Activated CD8-positive, alpha-beta T cell treated with anti-CD3 and anti-CD28 coated beads, Interleukin-2, amount 10 ng/mL, durations not matched to agents 7 days and 5 days (primary cell): ENCODE measurements at regions of chr17 and their contacts with region 1.

Region 1: DNA sequence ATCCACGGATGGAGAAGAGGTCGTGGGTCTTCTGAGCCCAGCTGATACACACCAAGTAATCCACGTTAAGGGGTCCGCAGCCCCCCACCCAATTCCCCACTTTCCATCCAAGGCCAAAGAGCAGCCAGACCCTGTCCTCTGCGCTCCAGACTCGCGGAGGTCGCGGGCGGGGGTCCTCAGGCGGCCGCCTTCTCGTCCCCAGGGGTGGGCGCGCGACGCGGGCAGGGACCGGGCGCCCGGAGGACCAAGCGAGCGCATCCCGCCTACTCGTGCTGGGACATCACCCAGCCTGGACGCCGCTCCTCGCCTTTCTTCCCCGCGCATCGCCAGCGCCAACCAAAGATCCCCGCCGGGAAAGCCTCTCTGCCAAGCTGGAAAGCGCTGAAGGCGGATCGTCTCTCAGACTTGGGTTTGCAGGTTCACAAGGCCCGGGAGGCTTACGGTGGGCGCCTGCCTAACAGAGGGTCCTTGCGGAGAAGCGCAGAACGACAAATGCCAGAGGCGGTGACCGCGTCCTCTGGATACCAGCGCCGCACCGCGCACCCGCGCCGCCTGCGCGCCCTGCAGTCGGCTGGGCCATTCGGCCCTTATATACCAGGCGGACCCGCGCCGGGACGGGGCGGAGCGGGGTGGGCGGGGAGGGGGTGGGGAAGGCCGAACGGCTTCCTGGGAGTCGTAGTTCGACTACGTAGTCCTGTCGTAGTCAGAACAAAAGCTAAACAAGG is 471.6 kb downstream of the SOX9 start:
- DNase-seq: peak; percentile 74
- ATAC-seq: peak; percentile 90
- H3K4me3 Mint-ChIP-seq: peak overlapping the region; percentile 81
- H3K27ac Mint-ChIP-seq: no peak overlapping the region
- H3K4me1 Mint-ChIP-seq: peaks cover 27% of the 10 kb centered on the region
- H3K27me3 Mint-ChIP-seq: peaks cover 69% of the 10 kb centered on the region

Region 2: GRCh38 chr17:72287586-72287985 is 304.8 kb before region 1 on chr17:
- CTCF ChIA-PET with region 1: no interaction called
- POLR2A ChIA-PET with region 1: no interaction called
- DNase-seq: no peak
- ATAC-seq: no peak
- H3K4me3 Mint-ChIP-seq: no peak overlapping the region
- H3K27ac Mint-ChIP-seq: no peak overlapping the region
- H3K4me1 Mint-ChIP-seq: no peaks in the 10 kb centered on the region
- H3K27me3 Mint-ChIP-seq: no peaks in the 10 kb centered on the region

Region 3: DNA sequence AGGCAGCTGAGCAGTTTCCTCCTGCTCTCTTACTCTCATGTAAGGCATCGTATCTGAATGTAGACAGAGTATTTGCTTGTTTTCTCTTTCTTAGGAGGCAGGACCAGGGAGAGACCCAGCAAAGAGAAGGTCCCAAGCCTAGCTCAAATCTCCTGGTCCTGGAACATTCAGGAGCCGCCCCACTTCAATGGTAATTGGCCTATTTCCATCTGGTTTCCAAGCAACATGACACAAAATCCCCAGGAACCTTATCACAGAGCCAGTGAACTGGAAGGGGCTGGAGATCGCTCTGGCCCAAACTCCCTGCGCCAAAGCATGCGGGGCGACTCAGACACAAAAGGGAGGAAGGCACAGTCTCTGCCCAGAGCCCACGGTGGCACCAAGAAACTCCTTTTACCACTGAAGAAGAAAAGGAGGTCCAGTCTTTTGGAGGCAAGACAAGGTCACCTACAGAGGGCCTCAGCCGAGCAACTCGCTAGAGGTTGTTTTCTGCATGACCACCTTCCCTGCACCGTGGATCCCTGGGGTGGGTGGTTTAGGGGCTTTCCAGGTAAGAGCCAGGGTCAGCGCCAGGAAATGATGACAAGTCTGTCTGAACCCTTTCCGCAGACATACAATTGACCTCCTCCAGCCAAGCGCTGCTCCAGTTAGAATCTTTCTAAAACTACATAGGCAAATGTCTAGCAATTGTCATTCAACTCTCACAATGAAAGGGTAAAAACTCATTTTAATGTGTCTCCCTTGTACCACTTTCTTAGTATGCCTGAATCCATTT is 76.9 kb before region 1 on chr17:
- CTCF ChIA-PET with region 1: no interaction called
- POLR2A ChIA-PET with region 1: no interaction called
- DNase-seq: no peak
- ATAC-seq: no peak
- H3K4me3 Mint-ChIP-seq: no peak overlapping the region
- H3K27ac Mint-ChIP-seq: no peak overlapping the region
- H3K4me1 Mint-ChIP-seq: no peaks in the 10 kb centered on the region
- H3K27me3 Mint-ChIP-seq: peaks cover 7% of the 10 kb centered on the region

Region 4: DNA sequence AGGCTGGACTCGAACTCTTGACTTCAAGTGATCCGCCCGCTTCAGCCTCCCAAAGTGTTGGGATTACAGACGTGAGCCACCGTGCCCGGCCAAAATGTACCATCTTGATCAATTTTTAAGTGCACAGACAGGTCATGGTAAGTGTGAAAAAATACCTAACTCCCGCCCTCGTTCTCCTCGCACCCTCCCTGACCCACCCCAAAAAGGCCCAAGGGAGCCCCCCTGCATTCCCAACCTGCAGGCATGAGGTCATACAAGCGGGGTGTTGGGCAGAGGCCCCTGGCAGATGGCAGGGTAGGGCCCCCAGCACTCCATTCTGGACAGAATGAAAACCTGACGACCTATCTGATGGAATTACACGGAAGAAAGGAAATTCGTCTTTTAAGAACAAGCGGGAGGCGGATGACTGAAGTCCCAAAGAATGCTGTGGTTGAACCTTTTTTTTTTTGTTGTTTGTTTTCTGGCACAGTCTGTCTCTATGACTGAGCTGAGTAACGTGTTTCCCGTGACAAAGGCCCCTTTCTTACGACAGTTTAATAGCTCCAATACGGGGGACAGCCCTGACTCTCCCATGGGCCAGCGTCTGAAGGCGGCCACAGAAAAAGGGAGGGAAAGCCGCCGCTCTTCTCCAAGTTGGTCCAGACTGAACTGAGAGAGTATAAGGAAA is 123.6 kb after region 1 on chr17:
- CTCF ChIA-PET with region 1: interaction called, 4 read pairs
- POLR2A ChIA-PET with region 1: interaction called, 10 read pairs
- DNase-seq: no peak
- ATAC-seq: no peak
- H3K4me3 Mint-ChIP-seq: no peak overlapping the region
- H3K27ac Mint-ChIP-seq: no peak overlapping the region
- H3K4me1 Mint-ChIP-seq: peaks cover 54% of the 10 kb centered on the region
- H3K27me3 Mint-ChIP-seq: no peaks in the 10 kb centered on the region

Region 5: DNA sequence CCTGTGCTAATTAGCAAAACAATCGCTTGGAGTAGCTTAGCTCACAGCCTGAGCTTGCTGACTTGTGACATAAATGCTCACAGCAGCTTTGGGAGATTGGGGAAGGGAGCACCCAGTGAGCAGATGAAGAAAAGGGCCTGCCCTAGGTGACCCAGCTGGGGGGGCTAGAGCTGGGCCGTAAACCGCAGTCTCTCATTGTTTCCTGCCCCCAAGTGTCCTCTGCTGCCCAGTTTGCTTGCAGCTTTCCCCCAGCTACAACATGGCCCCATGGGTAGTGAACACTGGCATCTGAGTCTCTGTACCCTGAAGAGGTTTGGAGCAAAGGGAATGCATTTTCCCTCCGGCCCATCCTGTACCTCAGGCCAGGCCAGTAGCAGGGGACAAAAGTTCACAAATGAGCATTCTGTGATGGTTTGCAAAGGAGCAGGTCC is 150.6 kb after region 1 on chr17:
- CTCF ChIA-PET with region 1: no interaction called
- POLR2A ChIA-PET with region 1: no interaction called
- DNase-seq: no peak
- ATAC-seq: no peak
- H3K4me3 Mint-ChIP-seq: no peak overlapping the region
- H3K27ac Mint-ChIP-seq: no peak overlapping the region
- H3K4me1 Mint-ChIP-seq: no peaks in the 10 kb centered on the region
- H3K27me3 Mint-ChIP-seq: no peaks in the 10 kb centered on the region